HEK293T (cell line): ENCODE measurements at regions of chrX and their contacts with region 1.

Region 1: DNA sequence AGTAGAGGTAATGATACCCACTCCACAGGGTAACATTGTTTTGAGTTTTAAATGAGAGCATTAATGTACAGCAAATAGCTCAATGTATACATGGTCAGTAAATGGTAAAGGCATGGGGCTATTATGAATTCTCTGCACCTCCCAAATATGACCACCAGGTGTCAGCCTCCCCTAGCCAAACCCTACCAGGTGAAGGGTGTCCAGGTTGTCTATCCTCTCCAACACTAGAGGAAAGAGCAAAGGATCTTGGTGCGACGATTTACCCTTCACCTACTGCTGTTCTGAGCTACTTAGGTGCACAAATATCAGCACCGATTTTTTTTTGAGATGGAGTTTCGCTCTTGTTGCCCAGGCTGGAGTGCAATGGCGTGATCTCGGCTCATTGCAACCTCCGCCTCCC is 26.5 kb upstream of the XIAP start:
- DNase-seq: peak; percentile 84

Region 2: GRCh38 chrX:123545009-123545408 is 288.4 kb before region 1 on chrX:
- CTCF ChIA-PET with region 1: no interaction called
- POLR2A ChIA-PET with region 1: no interaction called
- DNase-seq: no peak

Region 3: DNA sequence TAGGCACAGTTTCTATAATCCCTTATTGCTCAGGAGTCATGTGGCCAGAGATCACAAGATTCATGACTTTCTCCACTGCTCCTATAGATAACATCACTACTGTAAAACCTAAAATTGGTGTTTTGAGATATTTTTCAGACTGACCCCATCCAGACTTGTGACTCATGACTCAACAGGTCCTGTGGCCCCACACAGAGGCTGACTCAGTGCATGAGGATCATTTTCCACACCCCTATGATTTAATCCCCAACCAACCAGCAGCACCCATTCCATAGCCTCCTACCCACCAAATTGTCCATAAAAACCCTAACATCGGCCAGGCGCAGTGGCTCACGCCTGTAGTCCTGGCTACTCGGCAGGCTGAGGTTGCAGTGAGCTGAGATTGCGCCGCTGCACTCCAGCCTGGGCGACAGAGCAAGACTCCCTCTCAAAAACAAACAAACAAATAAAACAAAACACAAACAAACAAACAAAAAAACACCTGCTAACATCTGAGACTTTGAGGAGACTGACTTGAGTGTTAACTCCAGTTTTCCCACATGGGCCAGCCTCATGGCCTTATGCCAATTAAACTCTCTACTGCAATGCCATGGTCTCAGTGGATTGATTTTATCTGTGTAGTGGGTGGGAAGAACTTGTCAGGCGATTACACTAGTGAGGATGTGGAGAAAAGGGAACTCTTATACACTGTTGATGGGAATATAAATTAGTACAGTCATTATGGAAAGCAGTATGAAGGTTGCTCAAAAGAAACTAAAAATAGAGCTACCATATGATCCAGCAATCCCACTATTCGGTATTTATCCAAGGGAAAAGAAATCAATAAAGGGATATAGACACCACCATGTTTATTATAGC is 13.4 kb after region 1 on chrX:
- CTCF ChIA-PET with region 1: interaction called, 4 read pairs
- POLR2A ChIA-PET with region 1: interaction called, 14 read pairs
- DNase-seq: no peak

Region 4: GRCh38 chrX:123976706-123977316 is 143.4 kb after region 1 on chrX:
- CTCF ChIA-PET with region 1: interaction called, 13 read pairs
- POLR2A ChIA-PET with region 1: no interaction called
- DNase-seq: peak; percentile 21

Region 5: GRCh38 chrX:124086411-124086810 is 253.0 kb after region 1 on chrX:
- CTCF ChIA-PET with region 1: no interaction called
- POLR2A ChIA-PET with region 1: no interaction called
- DNase-seq: no peak